Body of pancreas (tissue), 4 donors: ENCODE measurements at regions of chr19 and their contacts with region 1.

Region 1: DNA sequence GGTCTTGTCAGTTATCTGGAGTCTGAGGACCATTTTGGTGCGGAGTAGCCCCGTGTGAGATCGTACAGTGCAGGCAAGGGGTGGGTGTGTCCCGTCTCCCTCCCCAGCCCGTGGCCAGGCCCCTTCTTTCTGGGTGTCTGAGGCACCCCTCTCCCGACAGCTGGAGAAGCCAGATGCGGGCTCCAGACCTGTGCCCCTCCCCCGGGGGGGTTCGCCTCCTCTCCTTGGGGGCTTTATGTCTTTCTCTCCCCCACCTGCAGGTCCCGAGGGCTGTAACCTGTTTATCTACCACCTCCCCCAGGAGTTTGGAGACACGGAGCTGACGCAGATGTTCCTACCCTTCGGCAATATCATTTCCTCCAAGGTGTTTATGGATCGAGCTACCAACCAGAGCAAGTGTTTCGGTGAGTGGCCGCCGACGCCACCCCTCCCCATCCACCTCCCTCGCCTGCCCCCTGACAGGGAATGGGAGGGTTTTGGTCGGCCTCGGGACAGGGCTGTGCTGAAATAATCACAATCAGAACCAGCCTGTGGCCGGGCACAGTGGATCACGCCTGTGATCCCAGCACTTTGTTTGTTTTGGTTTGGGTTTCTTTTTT is 65.6 kb downstream of the CELF5 start:
- DNase-seq: no peak
- ATAC-seq: no peak
- H3K4me3 ChIP-seq: no peak overlapping the region
- H3K27ac ChIP-seq: no peak overlapping the region
- H3K4me1 ChIP-seq: peaks cover 2% of the 10 kb centered on the region
- H3K27me3 ChIP-seq: no peaks in the 10 kb centered on the region
- CTCF ChIP-seq: no peak
- POLR2A ChIP-seq: no peak

Region 2: GRCh38 chr19:3243819-3244700 is 46.0 kb before region 1 on chr19:
- intact Hi-C with region 1: no loop called
- DNase-seq: peak in 3 of 4 donors; percentile 21 to 35 (median 27)
- ATAC-seq: no peak
- H3K4me3 ChIP-seq: no peak overlapping the region
- H3K27ac ChIP-seq: no peak overlapping the region
- H3K4me1 ChIP-seq: no peaks in the 10 kb centered on the region
- H3K27me3 ChIP-seq: no peaks in the 10 kb centered on the region
- CTCF ChIP-seq: no peak
- POLR2A ChIP-seq: no peak

Region 3: GRCh38 chr19:3618144-3618810 is 328.2 kb after region 1 on chr19:
- intact Hi-C with region 1: loop called (anchors 10 kb)
- DNase-seq: peak; percentile 44 to 62 (median 54)
- ATAC-seq: peak; percentile 60
- H3K4me3 ChIP-seq: no peak overlapping the region
- H3K27ac ChIP-seq: no peak overlapping the region
- H3K4me1 ChIP-seq: no peaks in the 10 kb centered on the region
- H3K27me3 ChIP-seq: no peaks in the 10 kb centered on the region
- CTCF ChIP-seq: peak; percentile 62 to 81 (median 74)
- POLR2A ChIP-seq: no peak